Aorta (tissue), 5 donors: ENCODE measurements at regions of chr7 and their contacts with region 1.

Region 1: DNA sequence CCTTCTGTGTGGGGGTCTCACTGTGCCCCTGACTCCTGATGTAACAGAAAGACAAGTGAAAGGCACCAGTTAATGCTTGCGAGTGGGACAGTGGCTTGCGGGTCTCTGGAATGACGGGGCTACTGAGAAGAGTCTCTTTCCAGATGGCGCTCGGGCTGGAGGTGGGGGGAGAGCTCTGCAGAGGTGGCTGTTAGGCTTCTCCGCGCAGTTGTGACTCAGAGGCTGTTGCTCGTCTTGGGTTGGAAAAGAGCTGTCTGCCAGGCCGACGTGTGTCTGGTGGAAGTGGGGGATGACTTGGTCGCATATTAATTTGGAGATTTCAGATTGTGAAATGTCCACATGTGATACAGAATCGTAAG is 27.9 kb upstream of the SH2B2 start:
- DNase-seq: no peak
- ATAC-seq: no peak
- H3K4me3 ChIP-seq: no peak overlapping the region
- H3K27ac ChIP-seq: no peak overlapping the region
- H3K4me1 ChIP-seq: no peaks in the 10 kb centered on the region
- H3K27me3 ChIP-seq: no peaks in the 10 kb centered on the region

Region 2: GRCh38 chr7:101586078-101586905 is 672.4 kb before region 1 on chr7:
- intact Hi-C with region 1: loop called in 1 of 2 experiments (anchors 10 kb)
- DNase-seq: no peak
- ATAC-seq: no peak
- H3K4me3 ChIP-seq: no peak overlapping the region
- H3K27ac ChIP-seq: no peak overlapping the region
- H3K4me1 ChIP-seq: no peaks in the 10 kb centered on the region
- H3K27me3 ChIP-seq: no peaks in the 10 kb centered on the region

Region 3: DNA sequence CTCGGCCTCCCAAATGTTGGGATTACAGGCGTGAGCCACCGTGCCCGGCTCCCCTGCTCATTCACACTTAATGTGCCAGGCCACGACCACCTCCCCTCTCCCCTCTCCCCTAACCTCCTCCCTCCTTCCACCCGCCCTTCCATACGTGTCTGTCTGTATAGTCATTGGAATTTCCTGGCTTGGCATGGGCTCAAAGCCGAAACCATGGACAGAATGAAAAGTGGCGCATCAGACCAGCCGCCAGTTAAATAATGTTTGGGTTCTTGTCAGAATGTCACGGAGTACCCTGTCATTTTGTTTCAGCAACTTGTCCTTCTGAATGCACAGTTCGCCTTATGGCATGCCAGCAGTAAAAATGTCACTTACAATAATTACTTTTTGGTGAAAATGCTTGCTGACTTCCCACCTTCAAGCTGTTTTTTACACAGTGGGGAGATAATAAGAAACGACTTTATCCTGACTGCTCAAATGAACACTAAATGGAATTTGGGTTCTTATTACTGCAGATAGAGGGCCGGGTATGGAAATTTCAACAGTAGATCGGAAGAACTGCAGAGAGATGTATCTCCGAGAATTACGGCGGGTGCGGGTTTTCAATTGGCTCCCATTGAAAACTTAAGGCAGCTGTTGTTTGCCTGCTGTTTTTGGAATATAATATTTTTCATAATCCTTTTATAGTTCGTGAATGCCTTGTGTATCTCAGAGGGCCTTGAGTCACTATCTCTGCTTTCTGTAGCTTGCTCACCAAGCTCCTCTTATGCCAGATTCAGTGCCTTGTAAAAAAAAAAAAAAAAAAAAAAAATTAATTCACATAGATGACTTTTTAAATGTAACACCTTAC is 37.5 kb before region 1 on chr7:
- intact Hi-C with region 1: no loop called
- DNase-seq: no peak
- ATAC-seq: no peak
- H3K4me3 ChIP-seq: no peak overlapping the region
- H3K27ac ChIP-seq: no peak overlapping the region
- H3K4me1 ChIP-seq: no peaks in the 10 kb centered on the region
- H3K27me3 ChIP-seq: no peaks in the 10 kb centered on the region